Activated T-helper 1 cell treated with anti-CD3 and anti-CD28 coated beads, Interleukin-12 subunit alpha, Interleukin-12 subunit beta, Interleukin-2, Interleukin-4 antibody, amounts not matched to agents 30 ng/mL and 10 ng/mL and 1 ng/mL, durations not matched to agents 14 hours and 24 hours and 36 hours (primary cell): ENCODE measurements at regions of chr11 and their contacts with region 1.

Region 1: DNA sequence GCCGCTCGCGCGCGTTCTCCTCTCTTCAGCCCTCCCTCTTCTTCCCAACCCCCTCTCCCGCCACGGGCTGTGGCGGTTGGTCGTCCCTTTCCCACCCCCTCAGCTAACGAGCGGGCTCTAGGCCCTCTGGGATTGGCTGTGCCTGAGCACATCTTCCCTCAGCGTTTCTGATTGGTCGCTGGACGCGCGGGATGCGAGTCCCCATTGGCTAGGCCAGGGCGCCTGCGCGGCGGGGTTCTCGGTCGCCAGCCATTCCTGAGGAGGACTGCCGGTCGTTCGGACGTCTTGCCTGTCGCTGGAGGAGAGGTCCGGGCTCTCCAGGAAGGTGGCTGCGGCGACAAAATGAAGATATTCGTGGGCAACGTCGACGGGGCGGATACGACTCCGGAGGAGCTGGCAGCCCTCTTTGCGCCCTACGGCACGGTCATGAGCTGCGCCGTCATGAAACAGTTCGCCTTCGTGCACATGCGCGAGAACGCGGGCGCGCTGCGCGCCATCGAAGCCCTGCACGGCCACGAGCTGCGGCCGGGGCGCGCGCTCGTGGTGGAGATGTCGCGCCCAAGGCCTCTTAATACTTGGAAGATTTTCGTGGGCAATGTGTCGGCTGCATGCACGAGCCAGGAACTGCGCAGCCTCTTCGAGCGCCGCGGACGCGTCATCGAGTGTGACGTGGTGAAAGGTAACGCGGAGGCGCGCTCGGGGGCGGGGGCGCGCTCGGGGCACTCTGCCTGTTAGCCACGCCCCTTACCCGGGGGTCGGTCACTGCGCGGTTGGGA is at the start of gene RBM14:
- DNase-seq: peak; percentile 99
- H3K4me3 Mint-ChIP-seq: peak within 1 kb of the TSS; percentile 97
- H3K27ac Mint-ChIP-seq: peak within 1 kb of the TSS; percentile 98
- H3K4me1 Mint-ChIP-seq: peaks cover 36% of the 10 kb centered on the region
- H3K27me3 Mint-ChIP-seq: no peaks in the 10 kb centered on the region
- total RNA-seq, gene RBM14: 198 and 200 TPM in 2 replicates

Region 2: GRCh38 chr11:66466225-66467027 is 150.1 kb before region 1 on chr11 and contains the start of gene PELI3:
- intact Hi-C with region 1: loop called (anchors 5 kb)
- DNase-seq: peak; percentile 86
- H3K4me3 Mint-ChIP-seq: peak within 1 kb of the TSS; percentile 94
- H3K27ac Mint-ChIP-seq: peak within 1 kb of the TSS; percentile 88
- H3K4me1 Mint-ChIP-seq: peaks cover 28% of the 10 kb centered on the region
- H3K27me3 Mint-ChIP-seq: no peaks in the 10 kb centered on the region
- total RNA-seq, gene PELI3: 15.3 and 15.8 TPM in 2 replicates

Region 3: GRCh38 chr11:66568124-66568916 is 48.2 kb before region 1 on chr11 and contains the start of gene CTSF:
- intact Hi-C with region 1: loop called (anchors 1 kb)
- DNase-seq: peak; percentile 63
- H3K4me3 Mint-ChIP-seq: peak within 1 kb of the TSS; percentile 73
- H3K27ac Mint-ChIP-seq: no peak within 1 kb of the TSS
- H3K4me1 Mint-ChIP-seq: no peaks in the 10 kb centered on the region
- H3K27me3 Mint-ChIP-seq: peaks cover 29% of the 10 kb centered on the region
- total RNA-seq, gene CTSF: 0.71 and 0.73 TPM in 2 replicates

Region 4: GRCh38 chr11:66579017-66579606 is 37.5 kb before region 1 on chr11:
- intact Hi-C with region 1: loop called (anchors 1 kb)
- DNase-seq: peak; percentile 53
- H3K4me3 Mint-ChIP-seq: no peak overlapping the region
- H3K27ac Mint-ChIP-seq: peak overlapping the region; percentile 9
- H3K4me1 Mint-ChIP-seq: peaks cover 14% of the 10 kb centered on the region
- H3K27me3 Mint-ChIP-seq: peaks cover 15% of the 10 kb centered on the region

Region 5: DNA sequence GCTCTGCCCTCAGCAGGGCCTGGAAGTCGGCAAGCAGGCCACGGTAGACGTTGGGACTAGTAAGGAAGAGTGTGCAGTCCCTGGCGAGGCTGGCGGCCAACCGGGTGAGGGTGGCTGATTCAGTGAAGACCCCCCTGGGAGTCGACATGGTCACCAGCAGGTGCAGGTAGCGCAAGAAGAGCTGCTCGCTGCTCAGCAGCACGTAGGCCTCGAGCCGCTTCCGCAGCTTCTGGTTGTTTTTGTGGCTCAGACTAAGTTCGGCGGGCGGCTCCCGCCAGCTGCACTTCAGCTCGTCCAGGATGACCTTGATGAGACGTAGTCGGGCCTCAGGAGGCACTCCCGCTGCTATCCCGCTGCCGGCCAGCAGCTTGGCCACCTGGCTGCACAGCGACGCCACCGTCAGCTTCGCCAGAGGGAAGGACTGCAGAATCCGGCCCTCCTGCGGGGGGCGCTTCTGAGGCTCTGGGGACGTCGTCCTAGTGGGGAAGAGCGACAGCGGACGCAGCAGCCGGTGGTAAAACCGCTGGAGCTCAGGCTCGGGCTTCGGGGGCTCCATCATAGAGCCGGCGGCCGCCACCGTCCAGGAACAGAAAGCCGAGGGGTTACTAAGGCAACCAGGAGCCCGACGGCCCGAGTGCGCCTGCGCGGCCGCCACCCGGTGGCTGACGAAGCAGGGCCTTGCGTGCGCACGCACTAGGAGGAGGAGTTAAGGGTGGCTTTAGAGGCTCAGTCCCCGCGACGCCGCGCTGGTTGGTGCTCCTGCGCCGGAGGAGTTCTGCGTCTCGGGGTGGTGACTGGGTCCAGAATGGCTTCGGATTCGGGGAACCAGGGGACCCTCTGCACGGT is 23.9 kb before region 1 on chr11 and contains the starts of genes CCDC87 and CCS:
- intact Hi-C with region 1: loop called (anchors 1 kb)
- DNase-seq: peak; percentile 96
- H3K4me3 Mint-ChIP-seq: peak within 1 kb of the TSS; percentile 100
- H3K27ac Mint-ChIP-seq: peak within 1 kb of the TSS; percentile 97
- H3K4me1 Mint-ChIP-seq: peaks cover 30% of the 10 kb centered on the region
- H3K27me3 Mint-ChIP-seq: no peaks in the 10 kb centered on the region
- total RNA-seq, gene CCDC87: 0.29 and 0.37 TPM in 2 replicates
- total RNA-seq, gene CCS: 25.3 and 32.1 TPM in 2 replicates

Region 6: DNA sequence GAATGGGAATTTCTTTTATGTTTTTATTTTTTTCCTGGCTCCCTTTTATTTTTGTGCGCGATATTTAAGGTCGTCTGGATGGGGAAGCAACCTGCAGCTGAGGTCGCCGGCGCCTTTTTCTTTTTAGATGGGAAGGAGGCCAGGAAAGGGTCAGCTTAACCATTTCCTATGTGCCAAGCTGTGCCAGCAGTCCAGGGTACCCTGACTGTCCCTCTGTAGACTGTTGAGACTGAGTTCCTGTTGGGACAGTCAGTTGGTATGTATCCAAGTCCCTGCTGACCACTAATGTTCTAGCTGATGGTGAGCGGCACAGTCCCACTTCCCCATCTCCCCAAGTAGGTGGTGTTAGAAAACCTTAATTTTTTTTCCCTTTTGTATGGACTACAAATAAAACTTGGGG is 10.4 kb after region 1 on chr11:
- intact Hi-C with region 1: no loop called
- DNase-seq: no peak
- H3K4me3 Mint-ChIP-seq: no peak overlapping the region
- H3K27ac Mint-ChIP-seq: no peak overlapping the region
- H3K4me1 Mint-ChIP-seq: peaks cover 37% of the 10 kb centered on the region
- H3K27me3 Mint-ChIP-seq: no peaks in the 10 kb centered on the region

Region 7: GRCh38 chr11:66638177-66639065 is 21.9 kb after region 1 on chr11 and contains the start of gene RBM4:
- intact Hi-C with region 1: loop called (anchors 1 kb)
- DNase-seq: peak; percentile 97
- H3K4me3 Mint-ChIP-seq: peak within 1 kb of the TSS; percentile 96
- H3K27ac Mint-ChIP-seq: peak within 1 kb of the TSS; percentile 96
- H3K4me1 Mint-ChIP-seq: peaks cover 68% of the 10 kb centered on the region
- H3K27me3 Mint-ChIP-seq: no peaks in the 10 kb centered on the region
- total RNA-seq, gene RBM4: 131 and 133 TPM in 2 replicates

Region 8: DNA sequence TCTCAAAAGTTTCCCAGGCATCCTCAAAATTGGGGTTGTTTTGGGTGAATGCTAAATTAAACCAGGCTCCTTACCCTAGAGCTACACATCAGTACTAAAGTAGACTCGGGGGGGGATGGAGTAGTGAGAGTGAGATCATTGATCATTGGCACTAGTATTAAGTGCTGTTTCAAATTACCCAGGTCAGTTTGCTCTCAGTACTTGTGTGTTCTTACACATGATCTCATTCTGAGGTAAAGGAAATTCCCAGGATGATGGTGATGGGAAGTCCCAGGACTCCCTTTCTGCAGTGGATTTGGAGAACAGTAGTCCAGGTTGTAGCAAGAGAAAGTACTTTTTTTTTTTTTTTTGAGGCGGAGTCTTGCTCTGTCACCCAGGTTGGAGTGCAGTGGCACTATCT is 34.4 kb after region 1 on chr11:
- intact Hi-C with region 1: no loop called
- DNase-seq: no peak
- H3K4me3 Mint-ChIP-seq: no peak overlapping the region
- H3K27ac Mint-ChIP-seq: no peak overlapping the region
- H3K4me1 Mint-ChIP-seq: peaks cover 16% of the 10 kb centered on the region
- H3K27me3 Mint-ChIP-seq: no peaks in the 10 kb centered on the region

Region 9: GRCh38 chr11:66958232-66958955 is 341.8 kb after region 1 on chr11 and contains the start of gene PC:
- intact Hi-C with region 1: loop called (anchors 5 kb)
- DNase-seq: peak; percentile 97
- H3K4me3 Mint-ChIP-seq: peak within 1 kb of the TSS; percentile 83
- H3K27ac Mint-ChIP-seq: peak within 1 kb of the TSS; percentile 90
- H3K4me1 Mint-ChIP-seq: peaks cover 29% of the 10 kb centered on the region
- H3K27me3 Mint-ChIP-seq: peaks cover 16% of the 10 kb centered on the region
- total RNA-seq, gene PC: 11.2 and 15.9 TPM in 2 replicates